CD4-positive, alpha-beta T cell (primary cell): ENCODE measurements at regions of chrX and their contacts with region 1.

Region 1: DNA sequence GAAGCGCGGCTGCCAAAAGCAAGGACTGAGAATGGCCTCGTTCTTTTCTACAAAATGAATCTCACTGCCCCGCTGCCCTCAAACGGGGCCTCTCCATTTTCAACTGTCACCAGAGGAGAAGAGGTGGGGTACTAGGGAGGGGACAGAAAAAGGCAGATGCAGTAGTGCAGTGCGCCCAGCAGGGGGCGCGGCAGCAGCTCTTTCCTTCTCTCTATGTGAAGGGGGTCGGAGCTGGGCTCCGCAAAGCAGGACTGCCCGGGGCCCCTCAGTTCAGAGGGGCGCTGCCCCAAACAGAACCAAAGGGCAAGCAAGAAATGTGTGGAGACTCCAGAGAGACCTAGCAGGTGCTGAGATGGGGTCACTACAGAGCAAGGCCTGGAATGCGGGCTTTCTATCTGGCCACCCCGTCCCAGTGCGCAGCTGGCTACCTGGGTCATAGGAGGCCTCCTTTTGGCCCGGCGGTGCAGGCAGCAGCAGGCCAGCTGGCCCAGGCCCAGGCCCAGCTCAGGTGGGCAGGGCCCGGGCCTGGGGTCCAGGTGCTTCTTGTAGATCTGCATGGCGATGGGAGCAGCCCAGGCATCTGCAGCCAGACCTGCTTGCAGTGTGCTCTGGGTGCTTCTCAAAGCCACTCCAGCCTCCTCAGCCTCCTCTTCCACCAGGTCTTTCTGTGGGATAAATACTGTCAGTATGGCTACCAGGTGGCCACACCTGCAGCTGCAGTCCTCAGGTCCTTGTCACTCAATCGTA is 5.9 kb downstream of the IRAK1 start:
- DNase-seq: peak; percentile 23 to 77 (median 42)
- ATAC-seq: peak; percentile 87
- H3K4me3 ChIP-seq: no peak overlapping the region
- H3K4me3 Mint-ChIP-seq: peak overlapping the region; percentile 54
- H3K27ac ChIP-seq: no peak overlapping the region
- H3K27ac Mint-ChIP-seq: peak overlapping the region; percentile 61
- H3K4me1 ChIP-seq: peaks cover 35% of the 10 kb centered on the region
- H3K4me1 Mint-ChIP-seq: peaks cover 5% of the 10 kb centered on the region
- H3K27me3 ChIP-seq: no peaks in the 10 kb centered on the region
- H3K27me3 Mint-ChIP-seq: no peaks in the 10 kb centered on the region
- CTCF ChIP-seq: peak; percentile 69

Region 2: GRCh38 chrX:154051201-154051810 is 37.5 kb after region 1 on chrX:
- CTCF ChIA-PET with region 1: interaction called, 12 read pairs
- POLR2A ChIA-PET with region 1: no interaction called
- intact Hi-C with region 1: no loop called
- DNase-seq: peak; percentile 40 to 83 (median 63)
- ATAC-seq: peak; percentile 84
- H3K4me3 ChIP-seq: no peak overlapping the region
- H3K4me3 Mint-ChIP-seq: no peak overlapping the region
- H3K27ac ChIP-seq: peak overlapping the region in 1 of 2 donors; percentile 22
- H3K27ac Mint-ChIP-seq: peak overlapping the region; percentile 83
- H3K4me1 ChIP-seq: peaks cover 36% of the 10 kb centered on the region
- H3K4me1 Mint-ChIP-seq: peaks cover 46% of the 10 kb centered on the region
- H3K27me3 ChIP-seq: no peaks in the 10 kb centered on the region
- H3K27me3 Mint-ChIP-seq: no peaks in the 10 kb centered on the region
- CTCF ChIP-seq: peak; percentile 59

Region 3: GRCh38 chrX:154534862-154535670 is 521.3 kb after region 1 on chrX:
- CTCF ChIA-PET with region 1: no interaction called
- POLR2A ChIA-PET with region 1: no interaction called
- intact Hi-C with region 1: loop called (anchors 1 kb)
- DNase-seq: peak; percentile 79 to 94 (median 88)
- ATAC-seq: peak; percentile 97
- H3K4me3 ChIP-seq: no peak overlapping the region
- H3K4me3 Mint-ChIP-seq: no peak overlapping the region
- H3K27ac ChIP-seq: no peak overlapping the region
- H3K27ac Mint-ChIP-seq: peak overlapping the region; percentile 51
- H3K4me1 ChIP-seq: peaks cover 9% of the 10 kb centered on the region
- H3K4me1 Mint-ChIP-seq: peaks cover 11% of the 10 kb centered on the region
- H3K27me3 ChIP-seq: no peaks in the 10 kb centered on the region
- H3K27me3 Mint-ChIP-seq: no peaks in the 10 kb centered on the region
- CTCF ChIP-seq: peak; percentile 97